ENCODE measurements at regions of chr3 and their contacts with region 1.

Region 1: GRCh38 chr3:142028243-142028777 is 121.0 kb downstream of the TFDP2 start:
- DNase-seq: peak; percentile 92
- H3K4me3 ChIP-seq: peak overlapping the region; percentile 84
- H3K27ac ChIP-seq: peak overlapping the region; percentile 80
- H3K4me1 ChIP-seq: peaks cover 57% of the 10 kb centered on the region
- CTCF ChIP-seq: no peak

Region 2: DNA sequence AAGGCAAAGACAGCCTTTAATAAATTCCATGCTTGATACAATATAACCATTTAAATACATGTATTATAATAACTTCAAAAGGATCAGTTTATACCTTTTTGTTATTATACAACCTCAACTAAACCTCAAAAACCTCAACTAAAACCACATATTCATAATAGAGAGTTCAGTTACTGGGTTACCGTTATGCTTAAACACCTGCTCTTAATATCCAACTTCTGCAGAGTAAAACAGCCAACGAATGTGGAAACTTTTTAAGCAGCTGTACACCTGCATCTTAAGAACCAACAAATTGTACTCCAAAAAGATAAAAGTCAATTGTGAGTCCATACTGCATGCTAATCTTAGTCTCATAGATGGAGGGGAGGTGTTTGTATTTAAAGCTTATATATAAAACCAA is 67.5 kb after region 1 on chr3:
- CTCF ChIA-PET with region 1: interaction called, 3 read pairs
- POLR2A ChIA-PET with region 1: interaction called, 11 read pairs
- intact Hi-C with region 1: loop called (anchors 2 kb)
- DNase-seq: peak; percentile 97
- H3K4me3 ChIP-seq: peak overlapping the region; percentile 34
- H3K27ac ChIP-seq: peak overlapping the region; percentile 100
- H3K4me1 ChIP-seq: peaks cover 98% of the 10 kb centered on the region
- CTCF ChIP-seq: no peak

Region 3: GRCh38 chr3:142175478-142175877 is 147.2 kb after region 1 on chr3:
- CTCF ChIA-PET with region 1: no interaction called
- POLR2A ChIA-PET with region 1: no interaction called
- intact Hi-C with region 1: no loop called
- DNase-seq: no peak
- H3K4me3 ChIP-seq: no peak overlapping the region
- H3K27ac ChIP-seq: no peak overlapping the region
- H3K4me1 ChIP-seq: no peaks in the 10 kb centered on the region
- CTCF ChIP-seq: no peak

Region 4: DNA sequence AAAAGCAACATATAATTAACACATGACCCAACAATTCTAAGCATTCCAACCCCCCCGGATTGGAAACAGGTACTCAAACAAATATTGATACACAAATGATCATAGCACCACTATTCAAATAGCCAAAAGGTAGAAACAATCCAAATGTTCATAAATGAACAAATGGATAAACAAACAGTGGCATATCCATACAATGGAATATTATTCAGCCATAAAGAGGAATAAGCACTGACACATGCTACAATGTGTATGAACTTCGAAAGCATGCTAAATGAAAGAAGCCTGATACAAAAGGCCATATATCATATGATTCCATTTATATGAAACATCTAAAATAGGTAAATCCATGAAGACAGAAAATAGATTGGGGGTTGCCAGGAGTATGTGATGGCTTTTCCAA is 356.8 kb after region 1 on chr3:
- CTCF ChIA-PET with region 1: no interaction called
- POLR2A ChIA-PET with region 1: no interaction called
- intact Hi-C with region 1: no loop called
- DNase-seq: no peak
- H3K4me3 ChIP-seq: no peak overlapping the region
- H3K27ac ChIP-seq: no peak overlapping the region
- H3K4me1 ChIP-seq: no peaks in the 10 kb centered on the region
- CTCF ChIP-seq: no peak

Region 5: DNA sequence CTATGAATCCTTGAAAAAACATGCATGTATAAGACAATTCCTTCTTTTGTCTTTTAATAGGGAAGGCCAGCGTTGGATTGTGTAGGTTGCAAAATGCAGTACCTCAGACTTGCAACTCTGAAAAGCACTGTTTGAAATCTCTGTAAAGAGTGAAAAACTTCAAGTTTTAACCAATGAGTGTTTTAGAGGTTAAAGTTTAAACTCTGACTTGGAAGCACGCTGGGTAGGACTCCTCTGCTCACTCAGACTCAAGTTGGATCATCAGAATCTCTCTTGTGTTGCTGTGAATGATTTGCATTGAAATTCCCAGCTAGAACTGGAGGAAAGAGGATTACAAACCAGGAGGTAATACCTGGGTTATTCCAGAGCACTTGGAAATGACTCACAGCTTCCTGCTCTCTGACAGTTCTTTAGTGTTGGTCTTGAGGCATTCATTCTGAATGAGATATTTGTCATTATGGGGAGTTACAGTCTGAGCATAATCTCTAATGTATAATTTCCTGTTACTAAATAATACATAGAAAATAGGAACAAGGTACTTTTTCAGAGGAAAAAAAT is 617.0 kb after region 1 on chr3:
- CTCF ChIA-PET with region 1: no interaction called
- POLR2A ChIA-PET with region 1: no interaction called
- intact Hi-C with region 1: no loop called
- DNase-seq: no peak
- H3K4me3 ChIP-seq: no peak overlapping the region
- H3K27ac ChIP-seq: no peak overlapping the region
- H3K4me1 ChIP-seq: no peaks in the 10 kb centered on the region
- CTCF ChIP-seq: no peak

Measured in OCI-LY7 (cell line).